Activated CD4-positive, alpha-beta T cell treated with anti-CD3 and anti-CD28 coated beads, Interleukin-2, amount 10 ng/mL, durations not matched to agents 7 days and 5 days (primary cell): ENCODE measurements at regions of chr6 and their contacts with region 1.

Region 1: GRCh38 chr6:127951172-127951917 is 50.5 kb upstream of the THEMIS start:
- DNase-seq: no peak
- H3K4me3 Mint-ChIP-seq: peak overlapping the region; percentile 53
- H3K27ac Mint-ChIP-seq: peak overlapping the region; percentile 95
- H3K4me1 Mint-ChIP-seq: peaks cover 63% of the 10 kb centered on the region
- H3K27me3 Mint-ChIP-seq: no peaks in the 10 kb centered on the region

Region 2: GRCh38 chr6:127941228-127941627 is 10.1 kb before region 1 on chr6:
- CTCF ChIA-PET with region 1: interaction called, 11 read pairs
- POLR2A ChIA-PET with region 1: no interaction called
- DNase-seq: no peak
- H3K4me3 Mint-ChIP-seq: no peak overlapping the region
- H3K27ac Mint-ChIP-seq: no peak overlapping the region
- H3K4me1 Mint-ChIP-seq: peaks cover 31% of the 10 kb centered on the region
- H3K27me3 Mint-ChIP-seq: no peaks in the 10 kb centered on the region

Region 3: DNA sequence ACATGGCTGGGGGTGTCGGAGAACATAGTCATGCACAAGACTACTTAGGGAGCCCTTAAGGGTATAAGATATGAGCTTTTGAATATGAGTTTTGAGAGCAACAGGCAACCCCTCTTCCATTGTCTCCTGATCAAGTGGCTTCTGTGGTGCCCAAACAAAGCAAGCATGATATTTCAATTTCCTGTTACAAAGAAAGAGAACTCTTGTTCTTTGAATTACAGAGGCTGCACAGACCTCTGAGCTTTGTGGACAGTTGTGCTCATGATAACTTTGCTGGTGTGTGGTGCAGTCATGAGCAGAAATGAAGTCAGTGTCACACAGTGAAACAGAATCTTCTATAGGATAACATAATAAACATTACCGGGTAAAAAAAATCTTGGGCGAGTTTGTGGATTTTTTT is 16.4 kb after region 1 on chr6:
- CTCF ChIA-PET with region 1: interaction called, 50 read pairs
- POLR2A ChIA-PET with region 1: no interaction called
- DNase-seq: peak; percentile 56
- H3K4me3 Mint-ChIP-seq: no peak overlapping the region
- H3K27ac Mint-ChIP-seq: peak overlapping the region; percentile 89
- H3K4me1 Mint-ChIP-seq: peaks cover 57% of the 10 kb centered on the region
- H3K27me3 Mint-ChIP-seq: no peaks in the 10 kb centered on the region

Region 4: GRCh38 chr6:127992144-127992543 is 40.8 kb after region 1 on chr6:
- CTCF ChIA-PET with region 1: no interaction called
- POLR2A ChIA-PET with region 1: no interaction called
- DNase-seq: no peak
- H3K4me3 Mint-ChIP-seq: no peak overlapping the region
- H3K27ac Mint-ChIP-seq: no peak overlapping the region
- H3K4me1 Mint-ChIP-seq: peaks cover 16% of the 10 kb centered on the region
- H3K27me3 Mint-ChIP-seq: no peaks in the 10 kb centered on the region

Region 5: GRCh38 chr6:128062882-128063603 is 111.7 kb after region 1 on chr6:
- CTCF ChIA-PET with region 1: no interaction called
- POLR2A ChIA-PET with region 1: no interaction called
- DNase-seq: no peak
- H3K4me3 Mint-ChIP-seq: no peak overlapping the region
- H3K27ac Mint-ChIP-seq: no peak overlapping the region
- H3K4me1 Mint-ChIP-seq: no peaks in the 10 kb centered on the region
- H3K27me3 Mint-ChIP-seq: no peaks in the 10 kb centered on the region